ENCODE measurements at regions of chr15 and their contacts with region 1.

Region 1: DNA sequence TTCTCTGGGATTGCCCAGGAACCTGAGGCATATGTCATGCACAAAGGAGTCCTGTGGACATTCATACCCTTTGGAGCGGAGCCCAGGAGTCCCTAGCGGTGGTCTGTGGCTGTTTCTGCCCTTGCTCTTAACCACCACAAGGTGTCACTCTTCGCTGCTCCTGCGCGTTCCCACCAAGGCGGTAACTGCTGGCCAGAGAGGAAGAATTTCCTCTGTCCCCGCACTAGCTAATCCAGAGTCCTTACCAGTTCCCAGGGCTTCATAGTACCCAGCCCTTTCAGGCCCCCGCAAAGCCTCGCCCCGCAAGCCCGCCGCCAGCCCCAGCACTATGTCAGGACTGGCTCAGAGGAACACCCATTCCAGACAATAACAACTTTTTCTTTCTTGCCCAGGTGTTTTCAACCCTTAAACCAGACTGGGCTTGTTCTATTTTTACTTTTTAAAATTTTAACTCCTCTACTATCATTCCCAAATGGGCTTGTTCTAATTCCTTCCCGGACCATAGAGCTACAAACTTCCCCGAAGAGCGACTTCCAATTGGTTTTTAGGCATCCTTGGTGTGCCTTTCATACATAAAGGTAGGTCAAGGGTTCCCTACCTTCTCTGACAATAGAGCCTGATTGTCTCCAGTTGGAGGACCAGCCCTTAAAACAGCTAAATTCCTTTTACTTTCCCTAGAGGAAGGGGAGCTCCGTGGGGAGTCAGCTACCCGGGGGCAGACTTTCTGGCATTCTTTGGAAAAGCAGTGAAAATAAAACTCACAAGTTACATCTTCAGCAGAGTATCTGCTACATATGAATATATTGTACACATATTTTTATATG is 31.8 kb upstream of the ZNF774 start:
- DNase-seq: peak; percentile 31 to 85 (median 64)
- ATAC-seq: peak; percentile 99
- H3K4me3 ChIP-seq: no peak overlapping the region
- H3K4me3 Mint-ChIP-seq: no peak overlapping the region
- H3K27ac ChIP-seq: no peak overlapping the region
- H3K27ac Mint-ChIP-seq: no peak overlapping the region
- H3K4me1 ChIP-seq: no peaks in the 10 kb centered on the region
- H3K4me1 Mint-ChIP-seq: peaks cover 5% of the 10 kb centered on the region
- H3K27me3 ChIP-seq: no peaks in the 10 kb centered on the region
- H3K27me3 Mint-ChIP-seq: peaks cover 3% of the 10 kb centered on the region
- CTCF ChIP-seq: peak; percentile 98

Region 2: GRCh38 chr15:90306560-90306959 is 13.7 kb before region 1 on chr15:
- CTCF ChIA-PET with region 1: interaction called, 54 read pairs
- POLR2A ChIA-PET with region 1: no interaction called
- intact Hi-C with region 1: no loop called
- DNase-seq: peak in 5 of 9 experiments; percentile 9 to 55 (median 36)
- ATAC-seq: peak; percentile 62
- H3K4me3 ChIP-seq: no peak overlapping the region
- H3K4me3 Mint-ChIP-seq: peak overlapping the region; percentile 53
- H3K27ac ChIP-seq: peak overlapping the region in 1 of 2 experiments; percentile 55
- H3K27ac Mint-ChIP-seq: peak overlapping the region; percentile 81
- H3K4me1 ChIP-seq: peaks cover 13% of the 10 kb centered on the region
- H3K4me1 Mint-ChIP-seq: peaks cover 19% of the 10 kb centered on the region
- H3K27me3 ChIP-seq: no peaks in the 10 kb centered on the region
- H3K27me3 Mint-ChIP-seq: no peaks in the 10 kb centered on the region
- CTCF ChIP-seq: no peak

Region 3: DNA sequence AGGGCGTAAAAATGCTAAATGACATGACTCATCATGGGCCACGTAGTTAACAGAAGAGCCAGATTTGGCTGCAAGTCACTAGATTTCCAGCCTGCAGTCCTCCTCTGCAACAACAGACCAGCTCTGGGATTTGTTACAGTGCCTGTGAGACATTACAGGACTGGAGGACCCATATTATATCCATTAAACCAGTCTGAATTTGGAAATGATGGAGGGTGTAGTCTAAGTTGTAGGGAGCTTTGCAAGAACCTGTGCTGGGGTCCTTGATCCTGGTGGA is 42.6 kb after region 1 on chr15:
- CTCF ChIA-PET with region 1: interaction called, 23 read pairs
- POLR2A ChIA-PET with region 1: no interaction called
- intact Hi-C with region 1: loop called in 1 of 2 experiments (anchors 1 kb)
- DNase-seq: no peak
- ATAC-seq: no peak
- H3K4me3 ChIP-seq: no peak overlapping the region
- H3K4me3 Mint-ChIP-seq: no peak overlapping the region
- H3K27ac ChIP-seq: no peak overlapping the region
- H3K27ac Mint-ChIP-seq: no peak overlapping the region
- H3K4me1 ChIP-seq: peaks cover 12% of the 10 kb centered on the region
- H3K4me1 Mint-ChIP-seq: peaks cover 18% of the 10 kb centered on the region
- H3K27me3 ChIP-seq: no peaks in the 10 kb centered on the region
- H3K27me3 Mint-ChIP-seq: no peaks in the 10 kb centered on the region
- CTCF ChIP-seq: no peak

Region 4: DNA sequence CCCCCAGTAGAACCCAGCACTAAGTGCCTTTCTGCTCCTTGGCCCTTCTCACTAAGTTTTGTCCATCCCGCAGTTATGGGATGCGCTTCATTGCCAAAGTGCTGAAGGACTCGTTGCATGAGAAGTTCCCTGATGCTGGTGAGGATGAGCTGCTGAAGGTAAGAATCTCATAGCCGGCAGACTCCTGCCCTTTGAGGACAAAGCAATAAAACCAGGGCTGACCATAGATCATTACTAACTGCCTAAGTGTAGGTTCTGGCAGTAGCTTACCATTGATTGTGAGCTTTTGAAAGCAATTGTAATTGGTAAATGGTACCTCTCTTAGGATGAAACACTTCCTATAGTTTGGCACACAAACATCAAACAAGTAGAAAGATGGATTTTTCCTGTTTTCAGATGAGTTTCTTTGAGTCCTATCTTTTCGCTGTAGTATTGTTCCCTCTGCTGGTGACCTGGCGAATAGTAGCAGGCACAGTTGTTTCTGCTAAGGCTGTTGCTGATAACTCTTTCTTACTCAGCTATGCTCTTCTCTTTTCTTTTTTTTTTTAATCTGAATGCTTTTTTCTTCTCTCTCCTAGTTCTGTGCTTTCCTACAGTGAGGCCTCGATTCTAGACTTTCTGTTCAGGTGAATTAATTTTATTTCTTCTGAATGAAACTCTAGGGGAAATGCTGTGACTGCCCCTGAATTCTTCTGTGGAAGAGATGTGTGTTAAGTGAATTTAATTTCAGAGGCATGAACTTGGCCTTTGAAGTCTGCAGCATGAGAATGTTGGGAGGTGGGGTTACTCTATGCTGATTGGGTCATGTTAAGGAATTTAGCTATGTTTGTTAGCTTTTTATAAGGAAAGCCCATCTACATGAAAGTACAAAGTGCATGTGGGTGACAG is 162.1 kb after region 1 on chr15:
- CTCF ChIA-PET with region 1: interaction called, 213 read pairs
- POLR2A ChIA-PET with region 1: interaction called, 4 read pairs
- intact Hi-C with region 1: loop called (anchors 1 kb)
- DNase-seq: peak in 8 of 9 experiments; percentile 10 to 67 (median 49)
- ATAC-seq: peak; percentile 67
- H3K4me3 ChIP-seq: no peak overlapping the region
- H3K4me3 Mint-ChIP-seq: no peak overlapping the region
- H3K27ac ChIP-seq: no peak overlapping the region
- H3K27ac Mint-ChIP-seq: no peak overlapping the region
- H3K4me1 ChIP-seq: peaks cover 12% of the 10 kb centered on the region
- H3K4me1 Mint-ChIP-seq: peaks cover 24% of the 10 kb centered on the region
- H3K27me3 ChIP-seq: no peaks in the 10 kb centered on the region
- H3K27me3 Mint-ChIP-seq: no peaks in the 10 kb centered on the region
- CTCF ChIP-seq: peak; percentile 84

Region 5: DNA sequence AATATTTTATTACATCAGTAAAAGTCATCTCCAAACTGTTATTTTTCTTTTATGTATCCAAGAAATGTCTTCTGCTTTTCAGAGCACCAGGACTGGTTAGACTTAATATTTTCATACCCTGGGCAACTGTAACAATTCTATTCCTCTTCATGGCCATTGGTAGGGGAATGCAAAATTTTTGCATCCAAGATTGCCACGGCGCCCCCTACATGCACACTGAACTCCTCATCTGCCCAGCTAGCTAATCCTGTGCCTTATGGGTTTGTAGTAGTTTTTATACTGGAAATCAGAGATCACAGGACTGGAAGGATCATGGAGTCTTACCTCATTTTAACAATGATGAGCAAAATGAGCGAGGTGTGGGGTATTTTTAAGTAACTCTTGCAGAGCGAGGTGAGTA is 283.6 kb after region 1 on chr15:
- CTCF ChIA-PET with region 1: interaction called, 5 read pairs
- POLR2A ChIA-PET with region 1: no interaction called
- intact Hi-C with region 1: loop called in 1 of 2 experiments (anchors 1 kb)
- DNase-seq: peak; percentile 12 to 75 (median 53)
- ATAC-seq: no peak
- H3K4me3 ChIP-seq: no peak overlapping the region
- H3K4me3 Mint-ChIP-seq: no peak overlapping the region
- H3K27ac ChIP-seq: no peak overlapping the region
- H3K27ac Mint-ChIP-seq: peak overlapping the region; percentile 17
- H3K4me1 ChIP-seq: peaks cover 28% of the 10 kb centered on the region
- H3K4me1 Mint-ChIP-seq: peaks cover 46% of the 10 kb centered on the region
- H3K27me3 ChIP-seq: no peaks in the 10 kb centered on the region
- H3K27me3 Mint-ChIP-seq: no peaks in the 10 kb centered on the region
- CTCF ChIP-seq: peak; percentile 45

Region 6: DNA sequence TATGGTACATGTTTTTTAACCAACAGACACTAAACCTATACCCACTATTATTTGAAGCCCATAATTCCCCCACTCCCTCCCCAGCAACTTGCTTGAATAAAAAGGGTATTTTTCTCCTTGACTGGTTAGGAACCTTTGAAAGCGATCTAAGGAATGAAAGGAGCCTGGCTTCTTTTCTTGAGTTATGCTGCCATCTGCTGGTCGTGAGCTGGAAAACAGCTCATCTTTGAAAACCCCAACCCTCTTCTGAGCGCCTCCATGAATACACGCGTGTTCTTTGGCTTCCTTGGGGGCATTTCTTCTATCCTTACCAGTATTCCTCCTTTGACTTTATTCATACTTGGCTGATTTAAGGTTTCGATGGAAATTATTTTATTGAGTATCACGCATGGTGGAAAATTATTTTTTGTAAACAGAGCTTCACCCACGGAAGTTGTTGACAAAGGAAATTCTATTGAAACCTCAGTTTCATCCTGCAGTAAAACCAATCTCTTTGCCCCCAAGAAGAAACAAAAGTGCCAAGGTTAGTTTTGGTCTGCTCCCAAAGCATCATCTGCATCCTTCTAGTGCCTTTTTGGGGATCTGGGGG is 951.4 kb after region 1 on chr15:
- CTCF ChIA-PET with region 1: no interaction called
- POLR2A ChIA-PET with region 1: no interaction called
- intact Hi-C with region 1: loop called in 1 of 2 experiments (anchors 10 kb)
- DNase-seq: peak; percentile 24 to 80 (median 60)
- ATAC-seq: peak; percentile 42
- H3K4me3 ChIP-seq: no peak overlapping the region
- H3K4me3 Mint-ChIP-seq: no peak overlapping the region
- H3K27ac ChIP-seq: no peak overlapping the region
- H3K27ac Mint-ChIP-seq: no peak overlapping the region
- H3K4me1 ChIP-seq: no peaks in the 10 kb centered on the region
- H3K4me1 Mint-ChIP-seq: peaks cover 5% of the 10 kb centered on the region
- H3K27me3 ChIP-seq: peaks cover 0 to 3% of the 10 kb centered on the region in 2 experiments
- H3K27me3 Mint-ChIP-seq: peaks cover 22% of the 10 kb centered on the region
- CTCF ChIP-seq: peak; percentile 74

Measured in CD8-positive, alpha-beta T cell (primary cell).